ENCODE measurements at regions of chr14 and their contacts with region 1.

Region 1: DNA sequence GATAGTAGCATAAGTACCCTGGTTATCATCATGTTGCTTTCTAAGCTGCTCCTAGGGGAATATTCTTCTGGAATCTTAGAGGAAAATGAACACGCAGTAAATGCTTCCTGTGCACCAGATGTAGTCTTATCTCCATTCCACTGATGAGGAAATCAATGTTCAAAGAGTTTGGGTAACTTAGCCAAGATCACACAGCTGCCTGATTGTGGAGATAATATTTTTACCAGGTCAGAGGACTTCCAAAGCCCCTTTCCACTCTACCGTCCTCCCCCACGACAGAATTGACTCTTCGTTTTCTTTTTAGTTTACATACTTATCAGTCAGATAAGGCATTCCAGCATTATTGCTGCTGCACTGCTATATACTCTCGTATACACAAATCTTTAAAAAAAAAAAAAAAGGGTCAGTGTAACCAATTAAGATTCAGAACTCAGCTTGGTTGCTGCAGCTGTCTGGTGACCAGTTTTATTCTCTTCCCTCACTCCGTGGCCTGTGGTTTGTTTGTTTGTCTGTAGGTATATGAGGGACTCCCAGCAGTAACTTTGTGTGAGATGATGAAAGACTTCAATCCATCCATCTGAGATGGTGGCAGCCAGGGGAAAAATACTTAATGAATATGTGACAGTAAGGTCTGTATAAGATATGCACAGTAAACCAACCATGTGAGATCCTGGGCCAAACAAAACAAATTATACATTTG is 110.5 kb downstream of the TGFB3 start:
- DNase-seq: peak; percentile 87 to 88
- H3K4me3 ChIP-seq: no peak overlapping the region
- H3K4me3 Mint-ChIP-seq: peak overlapping the region; percentile 22
- H3K27ac Mint-ChIP-seq: peak overlapping the region; percentile 74
- H3K4me1 ChIP-seq: peaks cover 40% of the 10 kb centered on the region
- H3K4me1 Mint-ChIP-seq: peaks cover 37% of the 10 kb centered on the region
- H3K27me3 ChIP-seq: no peaks in the 10 kb centered on the region
- H3K27me3 Mint-ChIP-seq: no peaks in the 10 kb centered on the region
- CTCF ChIP-seq: no peak

Region 2: GRCh38 chr14:75831458-75831857 is 39.9 kb before region 1 on chr14:
- CTCF ChIA-PET with region 1: interaction called, 3 read pairs
- POLR2A ChIA-PET with region 1: no interaction called
- intact Hi-C with region 1: loop called (anchors 1 kb)
- DNase-seq: peak; percentile 92
- H3K4me3 ChIP-seq: no peak overlapping the region
- H3K4me3 Mint-ChIP-seq: peak overlapping the region; percentile 44
- H3K27ac Mint-ChIP-seq: peak overlapping the region; percentile 87
- H3K4me1 ChIP-seq: peaks cover 58% of the 10 kb centered on the region
- H3K4me1 Mint-ChIP-seq: peaks cover 24% of the 10 kb centered on the region
- H3K27me3 ChIP-seq: no peaks in the 10 kb centered on the region
- H3K27me3 Mint-ChIP-seq: no peaks in the 10 kb centered on the region
- CTCF ChIP-seq: no peak

Region 3: GRCh38 chr14:75915061-75915460 is 43.7 kb after region 1 on chr14:
- CTCF ChIA-PET with region 1: no interaction called
- POLR2A ChIA-PET with region 1: interaction called, 4 read pairs
- intact Hi-C with region 1: loop called (anchors 2 kb)
- DNase-seq: peak in 1 of 2 experiments; percentile 39
- H3K4me3 ChIP-seq: no peak overlapping the region
- H3K4me3 Mint-ChIP-seq: peak overlapping the region; percentile 56
- H3K27ac Mint-ChIP-seq: peak overlapping the region; percentile 63
- H3K4me1 ChIP-seq: peaks cover 41% of the 10 kb centered on the region
- H3K4me1 Mint-ChIP-seq: peaks cover 32% of the 10 kb centered on the region
- H3K27me3 ChIP-seq: no peaks in the 10 kb centered on the region
- H3K27me3 Mint-ChIP-seq: no peaks in the 10 kb centered on the region
- CTCF ChIP-seq: no peak

Region 4: GRCh38 chr14:76236172-76237130 is 365.1 kb after region 1 on chr14:
- CTCF ChIA-PET with region 1: no interaction called
- POLR2A ChIA-PET with region 1: no interaction called
- intact Hi-C with region 1: no loop called
- DNase-seq: no peak
- H3K4me3 ChIP-seq: no peak overlapping the region
- H3K4me3 Mint-ChIP-seq: no peak overlapping the region
- H3K27ac Mint-ChIP-seq: no peak overlapping the region
- H3K4me1 ChIP-seq: no peaks in the 10 kb centered on the region
- H3K4me1 Mint-ChIP-seq: no peaks in the 10 kb centered on the region
- H3K27me3 ChIP-seq: no peaks in the 10 kb centered on the region
- H3K27me3 Mint-ChIP-seq: no peaks in the 10 kb centered on the region
- CTCF ChIP-seq: no peak